Uterus (tissue), 4 donors: ENCODE measurements at regions of chr11 and their contacts with region 1.

Region 1: GRCh38 chr11:30346068-30346688 is 23.3 kb downstream of the ARL14EP start:
- DNase-seq: no peak
- H3K4me3 ChIP-seq: no peak overlapping the region
- H3K27ac ChIP-seq: no peak overlapping the region
- H3K4me1 ChIP-seq: no peaks in the 10 kb centered on the region
- H3K27me3 ChIP-seq: no peaks in the 10 kb centered on the region
- CTCF ChIP-seq: peak; percentile 46 to 64 (median 61)
- POLR2A ChIP-seq: no peak

Region 2: GRCh38 chr11:30855383-30856006 is 509.3 kb after region 1 on chr11:
- intact Hi-C with region 1: loop called (anchors 10 kb)
- DNase-seq: no peak
- H3K4me3 ChIP-seq: no peak overlapping the region
- H3K27ac ChIP-seq: no peak overlapping the region
- H3K4me1 ChIP-seq: no peaks in the 10 kb centered on the region
- H3K27me3 ChIP-seq: no peaks in the 10 kb centered on the region
- CTCF ChIP-seq: peak; percentile 43 to 54 (median 46)
- POLR2A ChIP-seq: no peak